MCF 10A (cell line): ENCODE measurements at regions of chr6 and their contacts with region 1.

Region 1: GRCh38 chr6:137313928-137314855 is 95.0 kb upstream of the IFNGR1 start:
- DNase-seq: peak; percentile 76
- H3K4me3 Mint-ChIP-seq: no peak overlapping the region
- H3K27ac Mint-ChIP-seq: no peak overlapping the region
- H3K4me1 Mint-ChIP-seq: peaks cover 18% of the 10 kb centered on the region
- H3K27me3 Mint-ChIP-seq: no peaks in the 10 kb centered on the region
- CTCF ChIP-seq: peak; percentile 67

Region 2: GRCh38 chr6:136846046-136846445 is 468.1 kb before region 1 on chr6:
- CTCF ChIA-PET with region 1: no interaction called
- POLR2A ChIA-PET with region 1: no interaction called
- intact Hi-C with region 1: loop called (anchors 5 kb)
- DNase-seq: peak; percentile 63
- H3K4me3 Mint-ChIP-seq: no peak overlapping the region
- H3K27ac Mint-ChIP-seq: no peak overlapping the region
- H3K4me1 Mint-ChIP-seq: peaks cover 9% of the 10 kb centered on the region
- H3K27me3 Mint-ChIP-seq: no peaks in the 10 kb centered on the region
- CTCF ChIP-seq: peak; percentile 53

Region 3: GRCh38 chr6:137094411-137095008 is 219.7 kb before region 1 on chr6:
- CTCF ChIA-PET with region 1: interaction called, 26 read pairs
- POLR2A ChIA-PET with region 1: interaction called, 4 read pairs
- intact Hi-C with region 1: loop called (anchors 1 kb)
- DNase-seq: peak; percentile 81
- H3K4me3 Mint-ChIP-seq: no peak overlapping the region
- H3K27ac Mint-ChIP-seq: no peak overlapping the region
- H3K4me1 Mint-ChIP-seq: peaks cover 9% of the 10 kb centered on the region
- H3K27me3 Mint-ChIP-seq: no peaks in the 10 kb centered on the region
- CTCF ChIP-seq: peak; percentile 65

Region 4: DNA sequence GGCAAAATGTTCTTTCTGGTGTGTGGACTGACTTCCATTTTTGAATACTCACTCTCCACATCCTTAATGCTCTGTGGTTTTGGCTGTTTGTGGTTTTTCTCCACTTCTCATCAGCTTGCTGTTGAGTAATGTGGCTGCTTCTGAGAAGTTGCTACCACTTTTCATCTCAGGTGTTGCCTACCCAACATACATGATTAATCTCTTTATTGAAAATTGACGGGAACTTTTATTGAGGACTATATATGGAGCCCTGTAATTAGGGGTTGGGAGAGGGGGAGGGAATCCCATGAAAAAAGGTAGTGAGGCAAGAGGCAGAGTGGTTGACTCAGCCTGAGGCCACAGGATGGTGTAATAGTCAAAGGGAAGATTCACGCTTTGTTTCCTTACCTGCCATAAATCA is 158.4 kb before region 1 on chr6:
- CTCF ChIA-PET with region 1: interaction called, 6 read pairs
- POLR2A ChIA-PET with region 1: interaction called, 3 read pairs
- intact Hi-C with region 1: loop called (anchors 5 kb)
- DNase-seq: peak; percentile 93
- H3K4me3 Mint-ChIP-seq: peak overlapping the region; percentile 59
- H3K27ac Mint-ChIP-seq: peak overlapping the region; percentile 85
- H3K4me1 Mint-ChIP-seq: peaks cover 53% of the 10 kb centered on the region
- H3K27me3 Mint-ChIP-seq: no peaks in the 10 kb centered on the region
- CTCF ChIP-seq: no peak

Region 5: DNA sequence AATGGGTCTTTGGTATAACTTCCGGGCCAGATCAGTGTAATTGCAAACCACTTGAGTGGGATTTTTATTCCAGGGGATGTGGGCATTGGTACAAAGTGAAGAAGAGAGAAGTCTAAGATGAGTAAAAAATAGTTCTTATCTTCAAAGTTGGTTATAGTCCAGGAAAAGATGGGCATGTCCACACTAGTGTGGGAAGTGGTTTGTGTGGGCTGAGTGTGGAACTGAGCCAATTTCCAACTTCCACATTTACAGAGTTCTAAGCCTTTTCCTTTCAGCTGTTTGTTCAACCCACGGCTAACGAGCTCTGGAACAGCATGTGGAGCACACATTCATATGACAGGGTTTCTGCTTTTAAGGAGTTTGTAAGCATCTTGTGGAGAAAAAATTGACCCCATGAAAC is 22.8 kb before region 1 on chr6:
- CTCF ChIA-PET with region 1: interaction called, 13 read pairs
- POLR2A ChIA-PET with region 1: no interaction called
- intact Hi-C with region 1: no loop called
- DNase-seq: peak; percentile 73
- H3K4me3 Mint-ChIP-seq: no peak overlapping the region
- H3K27ac Mint-ChIP-seq: peak overlapping the region; percentile 19
- H3K4me1 Mint-ChIP-seq: peaks cover 15% of the 10 kb centered on the region
- H3K27me3 Mint-ChIP-seq: no peaks in the 10 kb centered on the region
- CTCF ChIP-seq: no peak